CD4-positive, alpha-beta memory T cell (primary cell): ENCODE measurements at regions of chr20 and their contacts with region 1.

Region 1: GRCh38 chr20:50750145-50750671 is 18.8 kb downstream of the PARD6B start:
- DNase-seq: no peak
- H3K4me3 ChIP-seq: no peak overlapping the region
- H3K4me3 Mint-ChIP-seq: no peak overlapping the region
- H3K27ac ChIP-seq: no peak overlapping the region
- H3K27ac Mint-ChIP-seq: no peak overlapping the region
- H3K4me1 ChIP-seq: peaks cover 11% of the 10 kb centered on the region
- H3K4me1 Mint-ChIP-seq: peaks cover 4 to 13% (median 11%) of the 10 kb centered on the region in 4 donors
- H3K27me3 ChIP-seq: no peaks in the 10 kb centered on the region
- H3K27me3 Mint-ChIP-seq: no peaks in the 10 kb centered on the region

Region 2: GRCh38 chr20:50652702-50653294 is 97.4 kb before region 1 on chr20:
- CTCF ChIA-PET with region 1: no interaction called
- POLR2A ChIA-PET with region 1: no interaction called
- intact Hi-C with region 1: no loop called
- DNase-seq: no peak
- H3K4me3 ChIP-seq: no peak overlapping the region
- H3K4me3 Mint-ChIP-seq: no peak overlapping the region
- H3K27ac ChIP-seq: no peak overlapping the region
- H3K27ac Mint-ChIP-seq: no peak overlapping the region
- H3K4me1 ChIP-seq: no peaks in the 10 kb centered on the region
- H3K4me1 Mint-ChIP-seq: no peaks in the 10 kb centered on the region
- H3K27me3 ChIP-seq: no peaks in the 10 kb centered on the region
- H3K27me3 Mint-ChIP-seq: no peaks in the 10 kb centered on the region

Region 3: DNA sequence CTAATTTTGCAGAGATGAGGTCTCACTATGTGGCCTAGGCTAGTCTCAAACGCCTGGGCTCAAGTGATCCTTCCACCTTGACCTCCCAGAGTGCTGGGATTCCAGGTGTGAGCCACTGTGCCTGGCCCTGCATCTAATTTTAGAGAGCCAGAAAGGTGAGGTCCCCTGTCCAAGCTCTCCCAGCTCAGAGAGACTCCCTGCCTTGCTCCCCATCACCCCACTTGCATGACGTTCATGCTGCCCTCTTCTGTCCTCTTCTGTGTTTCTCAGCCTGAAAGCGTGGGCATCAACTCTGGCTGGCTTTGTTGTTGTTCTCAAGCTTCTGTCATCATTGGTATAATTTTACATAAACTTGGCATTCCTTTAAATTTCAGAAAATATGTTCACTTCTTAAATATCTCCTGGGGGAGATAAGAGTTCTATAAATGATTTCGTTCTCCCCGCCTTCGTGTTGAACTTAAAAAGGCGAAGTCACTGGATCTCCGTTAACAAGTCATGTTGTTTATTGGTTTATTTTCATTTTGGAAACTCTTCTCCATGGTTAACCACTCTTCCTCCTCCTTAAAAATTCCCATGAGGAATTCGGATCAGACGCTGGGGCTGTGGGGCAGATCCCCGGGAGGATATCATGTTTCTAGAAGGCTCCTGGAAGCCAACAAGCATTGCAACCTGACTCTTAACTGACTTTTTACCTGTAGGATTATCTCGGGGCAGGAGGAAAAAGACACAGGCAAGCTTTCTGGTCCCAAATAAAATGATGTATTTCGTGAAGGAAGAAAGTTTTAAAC is 32.0 kb before region 1 on chr20:
- CTCF ChIA-PET with region 1: interaction called, 12 read pairs
- POLR2A ChIA-PET with region 1: no interaction called
- intact Hi-C with region 1: no loop called
- DNase-seq: no peak
- H3K4me3 ChIP-seq: no peak overlapping the region
- H3K4me3 Mint-ChIP-seq: no peak overlapping the region
- H3K27ac ChIP-seq: no peak overlapping the region
- H3K27ac Mint-ChIP-seq: peak overlapping the region in 1 of 7 donors; percentile 47
- H3K4me1 ChIP-seq: no peaks in the 10 kb centered on the region
- H3K4me1 Mint-ChIP-seq: no peaks in the 10 kb centered on the region
- H3K27me3 ChIP-seq: no peaks in the 10 kb centered on the region
- H3K27me3 Mint-ChIP-seq: peaks cover 6 to 9% of the 10 kb centered on the region in 2 donors

Region 4: DNA sequence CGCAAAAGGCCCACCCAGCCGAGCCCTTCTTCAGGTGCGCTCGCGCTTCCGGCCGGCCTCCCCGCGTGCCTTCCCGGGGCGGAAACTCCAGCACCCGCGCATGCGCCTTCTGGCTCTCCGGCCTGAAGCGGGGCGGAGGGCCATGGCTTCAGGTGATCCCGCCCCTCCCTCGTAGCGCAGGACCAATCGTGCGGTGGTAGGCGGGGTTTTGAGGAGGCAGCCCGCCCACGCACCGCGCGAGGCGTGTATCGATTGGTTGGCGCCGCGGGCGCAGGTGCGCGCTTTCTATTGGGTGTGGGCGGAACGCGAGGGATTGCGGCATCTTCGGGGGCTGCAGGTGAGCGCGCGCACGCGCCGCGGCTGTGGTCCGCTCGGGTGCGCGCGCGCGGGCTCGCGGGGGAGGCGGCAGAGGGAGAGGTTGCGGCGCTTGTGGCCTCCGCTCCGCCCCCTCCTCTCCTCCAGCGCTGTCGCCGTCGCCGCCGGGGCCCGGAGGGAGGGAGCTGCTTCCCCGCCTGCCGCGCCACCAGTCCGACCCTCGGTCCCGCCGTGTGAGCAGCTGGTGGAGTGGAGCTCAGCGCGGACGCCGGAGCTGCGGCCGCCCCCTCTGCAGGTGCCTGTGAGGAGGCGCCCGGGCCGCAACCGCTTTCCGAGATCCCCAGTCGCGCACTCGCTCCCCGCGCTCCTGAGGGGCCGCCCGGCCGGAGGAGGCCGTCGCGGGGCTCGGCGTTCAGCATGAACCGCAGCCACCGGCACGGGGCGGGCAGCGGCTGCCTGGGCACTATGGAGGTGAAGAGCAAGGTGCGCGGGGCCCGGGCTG is 18.9 kb before region 1 on chr20 and contains the start of gene PARD6B:
- CTCF ChIA-PET with region 1: interaction called, 35 read pairs
- POLR2A ChIA-PET with region 1: interaction called, 6 read pairs
- intact Hi-C with region 1: loop called (anchors 2 kb)
- DNase-seq: peak; percentile 99 to 100 (median 100)
- H3K4me3 ChIP-seq: peak within 1 kb of the TSS; percentile 66 to 72
- H3K4me3 Mint-ChIP-seq: peak within 1 kb of the TSS; percentile 90 to 95 (median 92)
- H3K27ac ChIP-seq: peak within 1 kb of the TSS; percentile 55
- H3K27ac Mint-ChIP-seq: peak within 1 kb of the TSS; percentile 83 to 91 (median 87)
- H3K4me1 ChIP-seq: peaks cover 21% of the 10 kb centered on the region
- H3K4me1 Mint-ChIP-seq: peaks cover 16 to 37% (median 24%) of the 10 kb centered on the region in 4 donors
- H3K27me3 ChIP-seq: no peaks in the 10 kb centered on the region
- H3K27me3 Mint-ChIP-seq: no peaks in the 10 kb centered on the region
- total RNA-seq, gene PARD6B: 10.9 to 12.7 TPM

Region 5: DNA sequence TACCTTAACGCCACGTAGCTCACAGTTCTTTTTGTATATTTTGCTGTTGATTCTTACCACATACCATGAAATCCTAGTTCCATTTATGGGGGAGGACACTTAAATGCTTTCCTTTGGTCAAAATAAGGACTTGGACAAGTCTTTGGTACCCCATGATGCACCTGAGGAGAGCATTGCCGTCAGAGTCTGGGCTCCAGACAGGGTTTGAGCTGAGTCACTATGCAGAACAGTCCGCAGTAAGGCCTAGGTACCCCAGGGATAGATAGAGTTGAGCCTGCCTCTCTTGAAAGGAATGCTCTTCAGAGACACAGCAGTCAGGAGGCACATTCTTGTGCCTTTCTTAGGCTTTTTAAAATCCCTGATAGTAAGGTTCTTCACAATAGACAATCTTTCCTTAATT is 12.9 kb before region 1 on chr20:
- CTCF ChIA-PET with region 1: interaction called, 35 read pairs
- POLR2A ChIA-PET with region 1: interaction called, 6 read pairs
- intact Hi-C with region 1: no loop called
- DNase-seq: no peak
- H3K4me3 ChIP-seq: no peak overlapping the region
- H3K4me3 Mint-ChIP-seq: no peak overlapping the region
- H3K27ac ChIP-seq: no peak overlapping the region
- H3K27ac Mint-ChIP-seq: peak overlapping the region in 2 of 7 donors; percentile 1 to 62
- H3K4me1 ChIP-seq: peaks cover 12% of the 10 kb centered on the region
- H3K4me1 Mint-ChIP-seq: peaks cover 18 to 31% (median 25%) of the 10 kb centered on the region in 4 donors
- H3K27me3 ChIP-seq: no peaks in the 10 kb centered on the region
- H3K27me3 Mint-ChIP-seq: no peaks in the 10 kb centered on the region